Heart left ventricle (tissue), 16 donors: ENCODE measurements at regions of chr11 and their contacts with region 1.

Region 1: DNA sequence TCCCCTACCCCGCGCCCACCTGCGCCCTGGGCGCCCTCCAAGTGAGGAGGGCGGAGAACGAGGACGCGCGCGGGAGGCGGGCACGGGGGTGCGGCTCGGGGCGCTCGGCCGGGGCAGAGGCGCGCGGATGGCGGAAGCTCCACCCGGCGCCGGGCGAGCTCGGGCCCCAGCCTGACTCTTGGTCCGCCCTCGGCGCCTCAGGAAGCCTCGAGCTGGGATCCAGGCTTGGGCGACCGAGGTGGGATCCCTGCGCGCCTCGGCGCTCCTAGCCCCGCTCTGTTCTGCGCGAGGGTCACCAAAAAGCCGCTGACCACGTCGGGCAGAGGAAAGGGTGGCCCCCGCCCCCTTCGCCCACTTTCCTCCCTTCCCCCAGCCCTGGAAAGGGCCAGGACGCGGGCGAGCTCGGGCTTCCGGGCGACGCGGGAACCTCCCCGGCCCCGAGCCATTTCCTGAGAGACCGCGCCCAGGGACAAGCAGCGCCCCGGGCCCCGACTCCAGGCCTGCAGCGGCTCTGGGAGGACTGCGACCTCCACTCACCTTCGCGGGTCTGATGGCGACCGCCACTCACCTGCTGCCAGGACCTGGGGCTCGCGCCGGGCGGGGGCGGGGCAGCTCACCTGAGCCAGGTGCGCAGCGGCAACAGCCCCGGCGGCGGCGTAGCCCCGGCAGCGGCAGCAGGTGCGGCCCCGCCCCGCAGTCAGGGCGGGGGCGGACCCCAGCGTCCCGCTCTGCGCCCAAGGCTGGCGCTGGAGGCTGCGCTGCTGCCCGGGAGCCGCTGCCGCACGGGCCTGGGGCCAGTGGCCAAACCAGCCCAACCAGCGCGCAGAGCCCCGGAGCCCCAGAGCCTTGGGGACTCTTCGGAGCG is 2.2 kb upstream of the SIGIRR start:
- DNase-seq: peak; percentile 60 to 83 (median 66)
- ATAC-seq: peak in 3 of 4 donors; percentile 65 to 67 (median 66)
- H3K4me3 ChIP-seq: peak overlapping the region; percentile 48 to 80 (median 64)
- H3K27ac ChIP-seq: peak overlapping the region; percentile 76 to 97 (median 92)
- H3K4me1 ChIP-seq: peaks cover 0 to 31% (median 13%) of the 10 kb centered on the region in 12 donors
- H3K27me3 ChIP-seq: peaks cover 4 to 60% (median 30%) of the 10 kb centered on the region in 9 donors
- CTCF ChIP-seq: no peak
- POLR2A ChIP-seq: peak in 1 of 2 donors; percentile 29

Region 2: GRCh38 chr11:304915-305843 is 111.8 kb before region 1 on chr11:
- intact Hi-C with region 1: loop called in 1 of 10 experiments (anchors 5 kb)
- DNase-seq: peak in 4 of 5 donors; percentile 59 to 73 (median 68)
- ATAC-seq: peak in 1 of 4 donors; percentile 19
- H3K4me3 ChIP-seq: no peak overlapping the region
- H3K27ac ChIP-seq: peak overlapping the region in 6 of 12 donors; percentile 11 to 99 (median 62)
- H3K4me1 ChIP-seq: peaks cover 0 to 42% (median 15%) of the 10 kb centered on the region in 12 donors
- H3K27me3 ChIP-seq: peaks cover 0 to 21% (median 4%) of the 10 kb centered on the region in 9 donors
- CTCF ChIP-seq: peak; percentile 55 to 76 (median 64)
- POLR2A ChIP-seq: no peak

Region 3: GRCh38 chr11:363948-364761 is 52.8 kb before region 1 on chr11:
- intact Hi-C with region 1: no loop called
- DNase-seq: no peak
- ATAC-seq: peak in 3 of 4 donors; percentile 23 to 46 (median 24)
- H3K4me3 ChIP-seq: no peak overlapping the region
- H3K27ac ChIP-seq: no peak overlapping the region
- H3K4me1 ChIP-seq: peaks cover 0 to 11% (median 6%) of the 10 kb centered on the region in 12 donors
- H3K27me3 ChIP-seq: peaks cover 11 to 62% (median 42%) of the 10 kb centered on the region in 9 donors
- CTCF ChIP-seq: peak in 1 of 12 donors; percentile 19
- POLR2A ChIP-seq: no peak

Region 4: DNA sequence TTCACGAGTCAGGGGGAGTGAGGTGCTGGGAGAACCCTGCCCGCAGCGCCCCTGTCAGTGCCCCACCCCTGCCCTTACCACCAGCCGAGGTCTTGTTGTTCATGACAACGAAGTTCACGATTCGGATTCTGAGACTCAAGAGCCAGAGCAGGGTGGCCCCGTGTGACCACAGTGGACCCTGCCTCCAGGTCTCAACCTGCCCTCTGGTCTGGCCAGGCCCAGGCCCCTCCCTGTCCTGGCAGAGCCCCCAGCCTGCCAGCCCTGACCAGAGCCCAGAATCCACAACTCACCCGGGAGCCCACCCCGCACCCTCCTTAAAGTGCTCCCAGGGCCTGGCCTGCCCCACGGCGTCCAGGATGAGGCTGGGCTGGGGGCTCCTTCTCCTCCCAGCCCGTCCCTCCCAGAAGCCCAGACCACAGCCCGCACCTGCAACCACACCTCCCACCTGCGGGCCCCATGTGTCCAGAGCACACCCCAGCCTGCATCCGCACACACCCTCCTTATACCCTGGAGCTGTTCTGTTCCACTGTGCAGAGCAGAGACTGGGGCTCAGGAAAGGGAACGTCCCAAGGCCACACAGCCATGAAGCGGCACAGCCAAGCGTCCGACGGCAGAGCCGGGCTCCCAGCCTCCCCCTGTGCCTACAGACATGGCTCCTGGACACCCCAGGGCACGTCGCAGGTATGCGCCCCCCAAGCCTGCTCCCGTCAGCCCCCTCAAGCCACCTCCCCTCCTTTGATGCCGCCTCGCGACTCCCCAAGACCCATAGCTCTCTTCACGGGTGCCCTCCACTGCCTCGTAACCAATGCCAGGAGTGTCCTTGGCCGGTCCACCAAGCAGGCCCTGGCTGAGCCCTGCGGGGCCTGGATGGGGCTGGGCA is 15.2 kb after region 1 on chr11:
- intact Hi-C with region 1: no loop called
- DNase-seq: peak in 2 of 5 donors; percentile 8 to 15
- ATAC-seq: no peak
- H3K4me3 ChIP-seq: no peak overlapping the region
- H3K27ac ChIP-seq: no peak overlapping the region
- H3K4me1 ChIP-seq: no peaks in the 10 kb centered on the region
- H3K27me3 ChIP-seq: peaks cover 0 to 11% (median 0%) of the 10 kb centered on the region in 9 donors
- CTCF ChIP-seq: no peak
- POLR2A ChIP-seq: no peak

Region 5: DNA sequence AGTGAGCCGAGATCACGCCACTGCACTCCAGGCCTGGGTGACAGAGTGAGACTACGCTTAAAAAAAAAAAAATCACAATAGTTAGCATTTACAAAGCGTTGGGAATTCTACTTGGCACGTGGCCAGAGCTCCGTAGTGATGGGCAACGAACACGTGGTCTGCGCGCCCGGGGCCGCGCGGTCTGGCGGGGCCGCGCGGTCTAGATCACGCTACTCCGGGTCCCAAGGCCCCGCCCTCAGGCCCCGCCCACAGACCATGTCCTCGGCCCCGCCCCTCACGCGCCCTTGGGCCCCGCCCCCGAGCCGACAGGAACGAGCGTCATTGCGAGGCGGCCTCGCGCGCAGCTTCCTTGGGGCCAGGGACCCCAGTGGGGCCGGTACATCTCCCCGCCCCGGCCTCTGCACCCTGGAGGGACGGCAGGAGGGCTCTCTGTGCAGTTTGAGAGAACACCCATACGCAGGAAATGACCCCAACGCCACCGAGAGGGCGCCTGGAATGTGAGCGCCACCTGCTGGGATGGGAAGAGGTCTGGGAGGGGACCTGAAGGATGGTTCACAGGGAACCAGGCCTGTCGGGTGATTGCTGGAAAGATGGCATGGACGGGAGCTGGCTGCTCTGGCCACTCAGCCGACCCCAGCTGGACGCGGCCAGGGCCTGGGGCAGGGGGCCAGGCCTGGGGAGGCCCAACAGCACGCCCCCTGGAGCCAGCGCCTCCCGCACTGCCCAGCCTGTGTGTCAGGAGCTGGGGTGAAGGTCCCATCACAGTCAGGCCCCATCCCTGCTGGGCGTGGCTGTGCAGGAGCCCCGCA is 31.1 kb after region 1 on chr11:
- intact Hi-C with region 1: loop called in 1 of 10 experiments (anchors 2 kb)
- DNase-seq: peak; percentile 95 to 98 (median 95)
- ATAC-seq: peak; percentile 85 to 90 (median 86)
- H3K4me3 ChIP-seq: peak overlapping the region; percentile 26 to 92 (median 64)
- H3K27ac ChIP-seq: peak overlapping the region; percentile 77 to 97 (median 93)
- H3K4me1 ChIP-seq: peaks cover 0 to 45% (median 28%) of the 10 kb centered on the region in 12 donors
- H3K27me3 ChIP-seq: peaks cover 0 to 3% (median 0%) of the 10 kb centered on the region in 9 donors
- CTCF ChIP-seq: peak; percentile 64 to 98 (median 84)
- POLR2A ChIP-seq: peak in 1 of 2 donors; percentile 82

Region 6: GRCh38 chr11:762421-763072 is 345.6 kb after region 1 on chr11:
- intact Hi-C with region 1: no loop called
- DNase-seq: peak in 1 of 5 donors; percentile 17
- ATAC-seq: peak in 2 of 4 donors; percentile 6 to 16
- H3K4me3 ChIP-seq: no peak overlapping the region
- H3K27ac ChIP-seq: no peak overlapping the region
- H3K4me1 ChIP-seq: no peaks in the 10 kb centered on the region
- H3K27me3 ChIP-seq: no peaks in the 10 kb centered on the region
- CTCF ChIP-seq: peak in 1 of 12 donors; percentile 12
- POLR2A ChIP-seq: no peak